Naive thymus-derived CD4-positive, alpha-beta T cell (primary cell): ENCODE measurements at regions of chr12 and their contacts with region 1.

Region 1: GRCh38 chr12:46661110-46661845 is 164.5 kb downstream of the SLC38A4 start:
- DNase-seq: peak in 7 of 9 donors; percentile 18 to 61 (median 50)
- ATAC-seq: peak; percentile 79
- H3K4me3 ChIP-seq: no peak overlapping the region
- H3K4me3 Mint-ChIP-seq: peak overlapping the region in 2 of 10 donors; percentile 31 to 43
- H3K27ac ChIP-seq: no peak overlapping the region
- H3K27ac Mint-ChIP-seq: peak overlapping the region in 4 of 9 donors; percentile 32 to 58 (median 40)
- H3K4me1 ChIP-seq: peaks cover 0 to 9% of the 10 kb centered on the region in 2 donors
- H3K4me1 Mint-ChIP-seq: peaks cover 11 to 53% (median 28%) of the 10 kb centered on the region in 7 donors
- H3K27me3 ChIP-seq: no peaks in the 10 kb centered on the region
- H3K27me3 Mint-ChIP-seq: no peaks in the 10 kb centered on the region

Region 2: DNA sequence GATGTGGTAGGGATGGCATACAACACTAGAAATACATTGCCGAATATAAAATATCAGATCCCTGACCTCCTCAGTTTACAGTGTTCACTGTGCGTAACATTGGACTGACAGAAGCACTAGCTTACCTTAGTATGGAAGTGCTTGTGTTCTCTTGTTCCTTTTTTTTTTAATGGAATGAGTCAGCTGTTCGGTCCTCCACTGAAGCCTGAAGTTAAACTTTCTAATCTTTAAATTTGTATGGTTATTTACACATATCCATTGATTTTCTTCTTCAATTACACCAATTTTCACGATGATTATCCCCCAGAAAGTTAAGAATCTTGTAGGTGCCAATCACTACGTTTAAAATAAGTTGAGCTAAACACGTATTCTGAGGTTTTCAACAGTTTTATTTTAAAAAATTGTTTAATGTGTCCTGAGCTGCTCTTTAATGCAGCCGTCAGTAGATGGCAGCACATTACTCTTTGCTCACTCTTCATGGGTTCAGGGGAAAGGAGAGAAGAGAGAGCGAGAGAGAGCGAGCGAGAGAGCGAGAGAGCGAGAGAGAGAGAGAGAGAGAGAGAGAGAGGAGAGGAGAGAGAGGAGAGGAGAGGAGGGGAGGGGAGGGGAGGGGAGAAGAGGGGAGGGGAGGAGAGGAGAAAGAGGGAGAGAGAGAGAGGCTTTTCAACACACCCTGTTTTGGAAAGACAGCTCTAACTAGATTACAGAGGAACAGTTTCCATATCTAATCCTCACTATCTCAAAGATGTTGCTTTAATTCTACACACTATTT is 536.2 kb before region 1 on chr12:
- CTCF ChIA-PET with region 1: interaction called, 7 read pairs
- POLR2A ChIA-PET with region 1: no interaction called
- intact Hi-C with region 1: loop called in 1 of 2 experiments (anchors 1 kb)
- DNase-seq: peak in 7 of 9 donors; percentile 45 to 68 (median 57)
- ATAC-seq: peak; percentile 99
- H3K4me3 ChIP-seq: no peak overlapping the region
- H3K4me3 Mint-ChIP-seq: peak overlapping the region in 9 of 10 donors; percentile 50 to 81 (median 67)
- H3K27ac ChIP-seq: no peak overlapping the region
- H3K27ac Mint-ChIP-seq: peak overlapping the region; percentile 40 to 93 (median 85)
- H3K4me1 ChIP-seq: peaks cover 0 to 3% of the 10 kb centered on the region in 2 donors
- H3K4me1 Mint-ChIP-seq: peaks cover 3 to 7% (median 6%) of the 10 kb centered on the region in 7 donors
- H3K27me3 ChIP-seq: no peaks in the 10 kb centered on the region
- H3K27me3 Mint-ChIP-seq: peaks cover 0 to 45% (median 0%) of the 10 kb centered on the region in 5 donors

Region 3: DNA sequence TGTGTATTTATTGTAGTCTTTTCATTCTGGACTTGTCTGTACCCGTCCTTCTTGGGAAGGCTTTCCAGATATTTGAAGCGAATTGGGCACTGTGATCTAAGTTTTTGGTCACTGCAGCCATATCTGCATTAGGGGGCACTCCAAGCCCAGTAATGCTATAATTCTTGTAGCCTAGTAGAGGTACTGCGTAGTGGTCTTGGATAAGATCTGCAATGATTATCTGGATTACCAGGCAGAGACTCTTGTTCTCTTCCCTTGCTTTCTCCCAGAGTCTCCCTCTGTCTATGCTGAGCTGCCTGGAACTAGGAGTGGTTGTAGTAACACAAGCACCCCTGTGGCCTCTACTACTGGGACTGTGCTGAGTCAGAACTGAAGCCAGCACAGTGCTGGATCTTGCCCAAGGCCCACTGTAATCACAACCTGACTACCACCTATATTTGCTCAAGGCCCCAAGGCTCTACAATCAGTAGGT is 318.7 kb before region 1 on chr12:
- CTCF ChIA-PET with region 1: interaction called, 3 read pairs
- POLR2A ChIA-PET with region 1: no interaction called
- intact Hi-C with region 1: loop called in 1 of 2 experiments (anchors 1 kb)
- DNase-seq: peak in 7 of 9 donors; percentile 17 to 53 (median 40)
- ATAC-seq: peak; percentile 65
- H3K4me3 ChIP-seq: no peak overlapping the region
- H3K4me3 Mint-ChIP-seq: no peak overlapping the region
- H3K27ac ChIP-seq: no peak overlapping the region
- H3K27ac Mint-ChIP-seq: peak overlapping the region in 2 of 9 donors; percentile 22 to 51
- H3K4me1 ChIP-seq: no peaks in the 10 kb centered on the region
- H3K4me1 Mint-ChIP-seq: peaks cover 0 to 4% (median 0%) of the 10 kb centered on the region in 7 donors
- H3K27me3 ChIP-seq: peaks cover 0 to 3% of the 10 kb centered on the region in 2 donors
- H3K27me3 Mint-ChIP-seq: peaks cover 0 to 22% (median 10%) of the 10 kb centered on the region in 5 donors

Region 4: DNA sequence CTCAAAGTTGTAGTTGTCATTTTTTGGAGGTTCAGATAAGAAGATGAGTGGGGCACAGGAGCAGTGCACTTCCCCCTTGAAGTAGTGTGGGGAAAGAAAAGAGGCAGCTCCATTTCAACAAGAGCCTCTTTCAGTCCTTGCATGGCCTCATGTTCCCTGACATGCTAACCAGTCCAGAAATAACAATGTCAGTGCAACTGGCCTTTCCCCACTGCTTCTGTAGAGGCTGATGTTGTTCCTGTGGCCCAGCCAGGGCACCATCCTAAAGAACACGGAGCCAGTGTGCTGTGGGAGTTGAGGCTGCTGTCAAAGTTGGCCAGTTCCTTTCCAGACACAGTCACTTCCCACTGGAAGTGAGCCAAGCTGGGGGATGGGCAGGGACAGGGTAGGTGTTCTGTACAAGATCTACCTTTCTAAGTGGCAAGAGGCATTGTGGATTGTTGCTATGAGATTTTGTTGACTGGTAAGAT is 211.0 kb before region 1 on chr12:
- CTCF ChIA-PET with region 1: interaction called, 5 read pairs
- POLR2A ChIA-PET with region 1: interaction called, 3 read pairs
- intact Hi-C with region 1: loop called in 1 of 2 experiments (anchors 10 kb)
- DNase-seq: no peak
- ATAC-seq: no peak
- H3K4me3 ChIP-seq: no peak overlapping the region
- H3K4me3 Mint-ChIP-seq: peak overlapping the region in 5 of 10 donors; percentile 1 to 75 (median 49)
- H3K27ac ChIP-seq: no peak overlapping the region
- H3K27ac Mint-ChIP-seq: peak overlapping the region in 6 of 9 donors; percentile 24 to 90 (median 75)
- H3K4me1 ChIP-seq: peaks cover 0 to 25% of the 10 kb centered on the region in 2 donors
- H3K4me1 Mint-ChIP-seq: peaks cover 35 to 62% (median 54%) of the 10 kb centered on the region in 7 donors
- H3K27me3 ChIP-seq: no peaks in the 10 kb centered on the region
- H3K27me3 Mint-ChIP-seq: peaks cover 0 to 3% (median 0%) of the 10 kb centered on the region in 5 donors

Region 5: DNA sequence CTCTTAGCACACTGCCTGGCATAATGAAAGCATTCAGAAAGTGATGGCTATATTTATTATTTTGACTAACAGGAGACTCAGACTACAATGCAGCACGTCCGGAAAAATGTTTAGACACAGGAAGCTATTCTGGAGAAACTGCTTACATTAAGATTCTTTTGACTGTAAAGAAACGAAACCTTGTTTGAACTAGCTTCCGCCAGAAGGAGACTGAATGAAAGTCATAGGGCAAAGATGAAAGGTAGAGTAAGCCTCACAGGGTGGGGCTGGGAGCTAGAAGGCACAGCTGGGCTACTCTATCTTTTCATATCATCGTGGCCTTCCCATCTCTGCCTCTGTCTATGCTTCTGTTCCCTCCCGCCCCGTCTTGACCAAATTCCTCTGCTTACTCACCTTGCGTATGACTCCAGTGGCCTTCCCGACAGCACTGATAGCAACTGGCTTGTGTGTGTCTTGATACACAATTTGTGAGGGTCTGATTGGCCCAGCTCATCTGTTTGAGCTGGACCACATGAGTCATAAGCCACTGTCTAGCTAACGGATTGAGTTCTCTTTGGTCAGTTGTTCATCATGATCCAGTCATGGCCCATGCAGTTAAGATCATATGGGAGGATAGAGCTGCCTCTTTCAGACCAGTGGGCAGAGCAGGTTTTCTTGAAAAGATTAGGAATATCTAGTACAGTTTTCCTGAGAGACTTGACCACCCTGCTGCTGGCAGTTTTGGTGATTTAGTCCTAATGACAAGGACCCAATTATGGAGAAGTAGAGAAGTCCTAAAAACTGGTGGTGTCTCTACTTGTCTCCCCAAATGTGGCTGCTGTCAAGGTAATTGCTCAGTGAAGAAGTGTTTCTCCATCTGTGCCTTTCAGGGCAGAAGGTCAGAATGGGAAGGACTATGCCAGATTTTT is 137.2 kb before region 1 on chr12:
- CTCF ChIA-PET with region 1: interaction called, 3 read pairs
- POLR2A ChIA-PET with region 1: no interaction called
- intact Hi-C with region 1: loop called in 1 of 2 experiments (anchors 2 kb)
- DNase-seq: peak in 8 of 9 donors; percentile 53 to 76 (median 69)
- ATAC-seq: peak; percentile 95
- H3K4me3 ChIP-seq: peak overlapping the region; percentile 5
- H3K4me3 Mint-ChIP-seq: peak overlapping the region; percentile 68 to 84 (median 76)
- H3K27ac ChIP-seq: peak overlapping the region; percentile 48
- H3K27ac Mint-ChIP-seq: peak overlapping the region; percentile 83 to 97 (median 90)
- H3K4me1 ChIP-seq: peaks cover 7 to 19% of the 10 kb centered on the region in 2 donors
- H3K4me1 Mint-ChIP-seq: peaks cover 21 to 57% (median 44%) of the 10 kb centered on the region in 7 donors
- H3K27me3 ChIP-seq: no peaks in the 10 kb centered on the region
- H3K27me3 Mint-ChIP-seq: no peaks in the 10 kb centered on the region

Region 6: DNA sequence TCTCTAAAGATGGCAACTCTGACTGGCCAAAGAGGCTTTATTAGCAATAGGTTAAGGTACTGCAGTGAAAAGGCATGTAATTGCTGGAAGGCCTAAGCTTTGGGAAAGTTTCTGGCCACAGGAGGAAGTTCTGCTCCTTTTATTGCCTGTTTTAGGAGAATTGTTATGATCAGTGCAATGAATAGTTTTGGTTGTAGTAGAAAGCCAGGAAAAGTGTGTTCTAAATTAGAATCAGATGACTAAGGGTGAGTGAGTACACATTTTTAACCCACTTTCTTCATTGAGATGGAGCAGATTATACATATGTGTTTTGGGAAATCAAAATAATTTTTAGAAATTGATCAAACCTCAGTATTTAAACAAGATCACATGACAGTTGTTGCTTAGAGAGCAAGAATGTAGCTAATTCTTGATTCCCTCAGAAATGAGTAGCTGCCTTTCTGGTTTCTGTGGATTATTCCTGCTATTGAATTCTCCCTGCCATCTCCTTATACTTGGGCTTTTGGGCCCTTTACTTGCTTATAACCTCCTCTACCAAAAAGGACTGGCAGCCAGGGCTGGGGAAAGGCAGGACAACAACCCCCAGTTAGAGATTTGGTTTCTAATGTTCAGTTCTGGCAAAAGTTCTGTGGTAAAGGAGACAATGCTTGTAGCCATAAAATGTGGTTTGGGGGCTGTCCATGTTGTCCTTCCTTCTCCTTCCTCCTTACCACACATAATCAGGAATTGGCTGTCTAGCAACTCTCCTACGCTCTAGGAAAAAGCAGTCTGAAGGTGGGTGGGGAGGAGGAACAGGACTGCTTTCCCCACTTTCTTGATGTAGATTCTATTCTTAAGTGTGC is 52.6 kb before region 1 on chr12:
- CTCF ChIA-PET with region 1: interaction called, 4 read pairs
- POLR2A ChIA-PET with region 1: interaction called, 4 read pairs
- intact Hi-C with region 1: loop called in 1 of 2 experiments (anchors 5 kb)
- DNase-seq: no peak
- ATAC-seq: no peak
- H3K4me3 ChIP-seq: no peak overlapping the region
- H3K4me3 Mint-ChIP-seq: peak overlapping the region; percentile 66 to 86 (median 74)
- H3K27ac ChIP-seq: no peak overlapping the region
- H3K27ac Mint-ChIP-seq: peak overlapping the region; percentile 60 to 93 (median 83)
- H3K4me1 ChIP-seq: peaks cover 21 to 27% of the 10 kb centered on the region in 2 donors
- H3K4me1 Mint-ChIP-seq: peaks cover 27 to 61% (median 59%) of the 10 kb centered on the region in 7 donors
- H3K27me3 ChIP-seq: no peaks in the 10 kb centered on the region
- H3K27me3 Mint-ChIP-seq: no peaks in the 10 kb centered on the region